GM10248 (cell line): ENCODE measurements at regions of chr1 and their contacts with region 1.

Region 1: DNA sequence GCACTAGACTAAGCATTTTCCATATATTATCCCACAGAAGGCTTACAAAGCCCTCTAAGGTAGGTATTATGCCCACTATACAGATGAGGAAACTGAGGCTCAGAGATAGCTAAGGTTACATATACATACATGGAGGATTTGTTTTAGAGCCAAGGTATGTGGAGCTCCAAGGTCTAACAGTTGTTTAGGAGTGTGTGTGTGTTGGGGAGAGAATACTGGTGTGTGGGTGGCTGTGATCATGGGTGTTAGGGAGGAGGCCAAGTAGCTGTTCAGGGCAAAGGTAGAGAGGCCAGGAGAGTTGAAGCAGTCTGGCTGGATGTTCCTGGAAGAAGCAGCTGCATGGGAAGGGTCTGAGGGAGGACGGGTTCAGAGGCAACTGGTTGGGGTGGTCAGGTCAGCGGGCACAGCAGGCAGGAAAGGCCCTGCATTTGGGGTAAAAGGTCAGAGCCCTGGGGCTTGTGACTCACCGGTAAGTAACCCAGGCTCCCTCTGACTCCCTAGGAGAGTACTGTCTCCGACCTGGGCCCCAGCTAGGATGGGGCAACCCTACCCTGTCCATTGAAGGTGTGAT is 5.1 kb upstream of the LDLRAP1 start:
- DNase-seq: no peak
- CTCF ChIP-seq: no peak

Region 2: GRCh38 chr1:25520446-25521061 is 17.7 kb before region 1 on chr1:
- CTCF ChIA-PET with region 1: interaction called, 19 read pairs
- POLR2A ChIA-PET with region 1: no interaction called
- DNase-seq: peak; percentile 72
- CTCF ChIP-seq: peak; percentile 75